Dendritic cell treated with granulocyte-macrophage colony-stimulating factor and Interleukin-4, amounts not matched to agents 40 ng/mL and 50 ng/mL, for 4 days (primary cell): ENCODE measurements at regions of chr6 and their contacts with region 1.

Region 1: DNA sequence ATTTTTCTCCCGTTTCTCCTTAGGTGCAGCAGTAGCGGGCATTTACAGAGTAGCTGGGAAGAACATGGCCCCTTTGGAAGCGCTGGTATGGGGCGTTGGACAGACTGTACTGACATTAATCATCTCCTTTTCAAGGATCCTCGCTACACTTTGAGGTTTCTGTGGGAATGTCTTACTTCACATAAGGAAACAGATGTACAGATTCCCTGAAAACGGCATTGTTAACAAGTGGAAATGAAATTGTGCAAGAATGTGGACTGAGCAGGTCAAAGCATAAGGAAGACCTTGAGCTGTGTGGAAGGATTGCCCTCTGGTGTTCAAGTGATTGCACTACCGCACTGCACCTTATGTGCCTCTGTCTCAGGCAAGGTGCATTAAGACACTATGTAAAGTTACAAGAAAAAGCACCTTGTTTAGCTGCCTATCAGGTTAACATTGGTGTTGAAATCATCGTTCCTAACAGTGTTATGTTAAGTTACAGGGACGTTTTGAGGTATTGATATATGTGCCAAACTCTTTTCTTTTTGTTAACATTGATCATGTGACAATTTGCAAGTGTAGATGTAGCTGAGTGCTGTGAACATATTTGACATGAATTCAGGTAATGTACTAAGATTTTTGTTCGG is 38.0 kb downstream of the TMEM170B start:
- H3K4me3 Mint-ChIP-seq: peak overlapping the region; percentile 51
- H3K27ac Mint-ChIP-seq: no peak overlapping the region
- H3K4me1 Mint-ChIP-seq: peaks cover 14% of the 10 kb centered on the region
- H3K27me3 Mint-ChIP-seq: no peaks in the 10 kb centered on the region

Region 2: GRCh38 chr6:11144393-11144851 is 431.1 kb before region 1 on chr6:
- intact Hi-C with region 1: loop called (anchors 1 kb)
- H3K4me3 Mint-ChIP-seq: no peak overlapping the region
- H3K27ac Mint-ChIP-seq: no peak overlapping the region
- H3K4me1 Mint-ChIP-seq: peaks cover 46% of the 10 kb centered on the region
- H3K27me3 Mint-ChIP-seq: no peaks in the 10 kb centered on the region